ENCODE measurements at regions of chrX and their contacts with region 1.

Region 1: GRCh38 chrX:70433848-70434351 is 10.7 kb upstream of the DLG3 start:
- DNase-seq: peak; percentile 51 to 87 (median 72)
- ATAC-seq: peak; percentile 79
- H3K4me3 ChIP-seq: peak overlapping the region; percentile 70 to 86
- H3K4me3 Mint-ChIP-seq: peak overlapping the region; percentile 90
- H3K27ac ChIP-seq: peak overlapping the region; percentile 72 to 83
- H3K27ac Mint-ChIP-seq: peak overlapping the region; percentile 94
- H3K4me1 ChIP-seq: peaks cover 4% of the 10 kb centered on the region
- H3K4me1 Mint-ChIP-seq: peaks cover 16% of the 10 kb centered on the region
- H3K27me3 ChIP-seq: no peaks in the 10 kb centered on the region
- H3K27me3 Mint-ChIP-seq: no peaks in the 10 kb centered on the region
- CTCF ChIP-seq: peak; percentile 63

Region 2: DNA sequence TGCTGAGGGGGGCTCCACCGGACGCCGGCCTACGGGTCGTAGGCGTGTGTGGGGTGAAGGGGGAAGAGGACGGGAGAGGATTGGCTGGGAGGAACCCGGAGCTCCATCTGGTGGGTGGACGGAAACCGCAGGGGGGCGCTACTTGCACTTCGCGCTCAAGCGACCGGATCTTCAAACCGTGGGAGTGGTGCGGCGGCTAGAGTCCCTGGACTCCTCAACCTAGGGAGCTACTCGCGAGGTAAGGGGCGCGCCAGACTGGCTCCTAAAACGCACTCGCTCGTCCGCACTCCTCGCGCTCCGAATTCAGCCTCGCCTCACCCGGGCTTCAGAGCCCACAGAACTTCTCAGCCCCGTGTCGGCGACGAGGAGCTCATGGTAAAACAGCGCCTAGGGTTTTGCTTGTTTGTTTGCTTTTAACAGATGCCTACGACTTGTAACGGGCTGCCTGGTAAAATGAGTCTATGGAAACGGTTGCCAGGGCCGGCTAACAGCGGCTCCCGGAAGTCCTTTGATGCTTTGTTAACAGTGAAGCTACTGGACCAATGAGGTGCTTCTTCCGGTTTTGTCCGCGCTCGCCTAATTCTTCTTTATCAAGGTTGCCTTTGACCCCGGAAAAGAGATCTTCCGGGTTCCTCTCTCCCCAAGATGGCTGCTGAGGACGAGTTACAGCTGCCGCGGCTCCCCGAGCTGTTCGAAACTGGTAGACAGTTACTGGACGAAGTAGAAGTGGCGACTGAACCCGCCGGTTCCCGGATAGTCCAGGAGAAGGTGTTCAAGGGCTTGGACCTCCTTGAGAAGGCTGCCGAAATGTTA is 300.4 kb before region 1 on chrX and contains the start of gene IGBP1:
- CTCF ChIA-PET with region 1: interaction called, 4 read pairs
- POLR2A ChIA-PET with region 1: interaction called, 6 read pairs
- intact Hi-C with region 1: loop called (anchors 2 to 5 kb)
- DNase-seq: peak; percentile 48 to 93 (median 76)
- ATAC-seq: peak; percentile 81
- H3K4me3 ChIP-seq: peak within 1 kb of the TSS; percentile 84 to 88
- H3K4me3 Mint-ChIP-seq: peak within 1 kb of the TSS; percentile 99
- H3K27ac ChIP-seq: peak within 1 kb of the TSS; percentile 95 to 96
- H3K27ac Mint-ChIP-seq: peak within 1 kb of the TSS; percentile 98
- H3K4me1 ChIP-seq: peaks cover 21% of the 10 kb centered on the region
- H3K4me1 Mint-ChIP-seq: peaks cover 45% of the 10 kb centered on the region
- H3K27me3 ChIP-seq: no peaks in the 10 kb centered on the region
- H3K27me3 Mint-ChIP-seq: no peaks in the 10 kb centered on the region
- CTCF ChIP-seq: peak; percentile 48
- total RNA-seq, gene IGBP1: 55.7 to 56.6 TPM

Region 3: GRCh38 chrX:70268034-70268433 is 165.9 kb before region 1 on chrX and contains the start of gene ARR3:
- CTCF ChIA-PET with region 1: no interaction called
- POLR2A ChIA-PET with region 1: no interaction called
- intact Hi-C with region 1: loop called in 1 of 2 experiments (anchors 5 kb)
- DNase-seq: no peak
- ATAC-seq: no peak
- H3K4me3 ChIP-seq: no peak within 1 kb of the TSS
- H3K4me3 Mint-ChIP-seq: no peak within 1 kb of the TSS
- H3K27ac ChIP-seq: no peak within 1 kb of the TSS
- H3K27ac Mint-ChIP-seq: no peak within 1 kb of the TSS
- H3K4me1 ChIP-seq: no peaks in the 10 kb centered on the region
- H3K4me1 Mint-ChIP-seq: no peaks in the 10 kb centered on the region
- H3K27me3 ChIP-seq: no peaks in the 10 kb centered on the region
- H3K27me3 Mint-ChIP-seq: no peaks in the 10 kb centered on the region
- CTCF ChIP-seq: no peak
- total RNA-seq, gene ARR3: not detected

Region 4: GRCh38 chrX:70332600-70332999 is 101.3 kb before region 1 on chrX:
- CTCF ChIA-PET with region 1: no interaction called
- POLR2A ChIA-PET with region 1: no interaction called
- intact Hi-C with region 1: loop called in 1 of 2 experiments (anchors 2 kb)
- DNase-seq: no peak
- ATAC-seq: no peak
- H3K4me3 ChIP-seq: no peak overlapping the region
- H3K4me3 Mint-ChIP-seq: no peak overlapping the region
- H3K27ac ChIP-seq: no peak overlapping the region
- H3K27ac Mint-ChIP-seq: no peak overlapping the region
- H3K4me1 ChIP-seq: no peaks in the 10 kb centered on the region
- H3K4me1 Mint-ChIP-seq: no peaks in the 10 kb centered on the region
- H3K27me3 ChIP-seq: no peaks in the 10 kb centered on the region
- H3K27me3 Mint-ChIP-seq: no peaks in the 10 kb centered on the region
- CTCF ChIP-seq: no peak

Region 5: DNA sequence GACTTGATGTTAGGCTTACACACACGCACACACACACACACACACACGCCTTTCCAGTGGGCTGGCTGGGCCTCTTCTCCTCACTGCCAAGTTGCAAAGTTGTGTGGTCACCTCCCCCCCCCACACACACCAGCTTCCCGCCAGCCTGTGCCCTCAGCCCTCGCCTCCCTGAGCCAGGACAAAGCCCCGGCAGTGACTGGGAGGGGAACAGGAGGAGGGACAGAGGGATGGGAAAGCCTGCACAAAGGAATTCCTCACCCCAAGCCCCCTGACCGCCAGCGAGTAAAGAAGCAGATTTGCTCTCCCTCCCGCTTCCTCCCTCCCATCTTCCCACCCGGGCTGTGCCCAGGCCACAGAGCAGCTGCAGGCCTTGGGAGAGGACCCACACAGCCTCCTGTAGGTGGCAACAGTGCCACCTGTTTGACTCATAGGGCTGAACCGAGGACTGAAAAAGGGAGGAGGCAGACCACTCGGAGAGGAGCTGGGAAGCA is 11.0 kb before region 1 on chrX and contains the start of gene GDPD2:
- CTCF ChIA-PET with region 1: interaction called, 10 read pairs
- POLR2A ChIA-PET with region 1: no interaction called
- intact Hi-C with region 1: no loop called
- DNase-seq: no peak
- ATAC-seq: no peak
- H3K4me3 ChIP-seq: no peak within 1 kb of the TSS
- H3K4me3 Mint-ChIP-seq: no peak within 1 kb of the TSS
- H3K27ac ChIP-seq: no peak within 1 kb of the TSS
- H3K27ac Mint-ChIP-seq: no peak within 1 kb of the TSS
- H3K4me1 ChIP-seq: no peaks in the 10 kb centered on the region
- H3K4me1 Mint-ChIP-seq: no peaks in the 10 kb centered on the region
- H3K27me3 ChIP-seq: no peaks in the 10 kb centered on the region
- H3K27me3 Mint-ChIP-seq: no peaks in the 10 kb centered on the region
- CTCF ChIP-seq: no peak
- total RNA-seq, gene GDPD2: not detected